Heart right ventricle (tissue), 16 donors: ENCODE measurements at regions of chr21 and their contacts with region 1.

Region 1: DNA sequence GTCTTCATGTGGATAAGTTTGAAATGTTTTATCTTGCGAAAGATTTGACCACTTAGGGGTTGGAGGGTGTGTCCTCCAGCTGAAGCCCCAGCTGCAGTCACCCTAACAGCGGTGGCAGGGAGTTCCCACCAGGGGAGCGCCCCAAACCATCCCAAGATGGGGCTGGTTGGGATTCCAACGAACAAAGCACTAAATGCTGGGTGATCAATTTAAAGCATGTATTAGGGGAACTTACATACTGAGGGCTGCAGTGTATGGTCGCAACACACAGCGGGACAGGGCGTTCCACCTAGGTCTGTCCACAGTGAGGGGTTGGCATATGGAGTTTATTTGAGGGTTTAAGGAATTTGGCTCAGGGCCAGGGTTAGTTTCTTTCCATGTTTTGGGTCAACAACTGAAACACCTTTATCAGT is 26.3 kb downstream of the SLC37A1 start:
- DNase-seq: no peak
- ATAC-seq: peak in 1 of 8 donors; percentile 9
- H3K4me3 ChIP-seq: no peak overlapping the region
- H3K27ac ChIP-seq: no peak overlapping the region
- H3K4me1 ChIP-seq: peaks cover 0 to 10% (median 3%) of the 10 kb centered on the region in 9 donors
- H3K27me3 ChIP-seq: no peaks in the 10 kb centered on the region
- CTCF ChIP-seq: no peak

Region 2: DNA sequence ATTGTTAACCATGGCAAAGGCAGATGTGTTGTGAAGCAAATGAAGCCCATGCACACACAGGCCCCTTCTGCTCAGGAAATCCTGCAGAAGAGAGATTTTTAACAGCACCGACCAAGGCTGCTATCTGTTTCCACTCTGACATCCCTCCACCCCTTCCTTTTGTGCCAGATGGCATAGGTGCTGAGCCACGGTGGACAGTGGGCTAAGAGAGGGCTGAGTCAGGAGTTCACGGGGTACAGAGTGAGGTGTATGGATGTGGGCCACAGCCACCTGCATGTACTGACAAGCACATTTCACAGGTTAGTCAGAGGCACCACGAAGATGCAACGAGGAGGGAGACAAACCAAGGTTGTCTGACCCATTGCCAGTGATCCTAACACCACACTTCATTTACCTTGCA is 53.4 kb before region 1 on chr21:
- intact Hi-C with region 1: loop called in 1 of 10 experiments (anchors 10 kb)
- DNase-seq: no peak
- ATAC-seq: no peak
- H3K4me3 ChIP-seq: no peak overlapping the region
- H3K27ac ChIP-seq: no peak overlapping the region
- H3K4me1 ChIP-seq: no peaks in the 10 kb centered on the region
- H3K27me3 ChIP-seq: peaks cover 0 to 19% (median 6%) of the 10 kb centered on the region in 7 donors
- CTCF ChIP-seq: no peak